Ovary (tissue), 10 donors: ENCODE measurements at regions of chr2 and their contacts with region 1.

Region 1: GRCh38 chr2:12587729-12588522 is 128.8 kb upstream of the TRIB2 start:
- DNase-seq: peak in 2 of 5 donors; percentile 18 to 37
- H3K4me3 ChIP-seq: no peak overlapping the region
- H3K27ac ChIP-seq: no peak overlapping the region
- H3K4me1 ChIP-seq: no peaks in the 10 kb centered on the region
- H3K27me3 ChIP-seq: no peaks in the 10 kb centered on the region
- CTCF ChIP-seq: no peak
- EP300 ChIP-seq: no peak
- POLR2A ChIP-seq: no peak

Region 2: GRCh38 chr2:12649602-12650400 is 61.9 kb after region 1 on chr2:
- intact Hi-C with region 1: loop called in 1 of 4 experiments (anchors 2 kb)
- DNase-seq: no peak
- H3K4me3 ChIP-seq: no peak overlapping the region
- H3K27ac ChIP-seq: no peak overlapping the region
- H3K4me1 ChIP-seq: no peaks in the 10 kb centered on the region
- H3K27me3 ChIP-seq: no peaks in the 10 kb centered on the region
- CTCF ChIP-seq: no peak
- EP300 ChIP-seq: no peak
- POLR2A ChIP-seq: no peak